Upper lobe of right lung (tissue), 1 donor: ENCODE measurements at regions of chr6 and their contacts with region 1.

Region 1: GRCh38 chr6:33088931-33089620 is 13.3 kb downstream of the HLA-DPB1 start:
- DNase-seq: no peak
- ATAC-seq: no peak
- H3K4me3 ChIP-seq: no peak overlapping the region
- H3K27ac ChIP-seq: no peak overlapping the region
- H3K4me1 ChIP-seq: no peaks in the 10 kb centered on the region
- H3K27me3 ChIP-seq: peaks cover 9% of the 10 kb centered on the region
- CTCF ChIP-seq: no peak

Region 2: GRCh38 chr6:32551410-32551809 is 537.7 kb before region 1 on chr6:
- intact Hi-C with region 1: no loop called
- DNase-seq: no peak
- ATAC-seq: peak; percentile 74
- H3K4me3 ChIP-seq: no peak overlapping the region
- H3K27ac ChIP-seq: no peak overlapping the region
- H3K4me1 ChIP-seq: no peaks in the 10 kb centered on the region
- H3K27me3 ChIP-seq: no peaks in the 10 kb centered on the region
- CTCF ChIP-seq: no peak

Region 3: GRCh38 chr6:33014841-33015634 is 74.0 kb before region 1 on chr6:
- intact Hi-C with region 1: loop called (anchors 5 kb)
- DNase-seq: no peak
- ATAC-seq: peak; percentile 66
- H3K4me3 ChIP-seq: no peak overlapping the region
- H3K27ac ChIP-seq: no peak overlapping the region
- H3K4me1 ChIP-seq: peaks cover 21% of the 10 kb centered on the region
- H3K27me3 ChIP-seq: no peaks in the 10 kb centered on the region
- CTCF ChIP-seq: peak; percentile 85